A673 (cell line): ENCODE measurements at regions of chr16 and their contacts with region 1.

Region 1: GRCh38 chr16:1884155-1884760 is 12.3 kb upstream of the MEIOB start:
- DNase-seq: peak; percentile 56
- H3K4me3 ChIP-seq: no peak overlapping the region
- H3K27ac ChIP-seq: no peak overlapping the region
- H3K4me1 ChIP-seq: no peaks in the 10 kb centered on the region
- H3K27me3 ChIP-seq: peaks cover 4% of the 10 kb centered on the region
- CTCF ChIP-seq: peak; percentile 37

Region 2: DNA sequence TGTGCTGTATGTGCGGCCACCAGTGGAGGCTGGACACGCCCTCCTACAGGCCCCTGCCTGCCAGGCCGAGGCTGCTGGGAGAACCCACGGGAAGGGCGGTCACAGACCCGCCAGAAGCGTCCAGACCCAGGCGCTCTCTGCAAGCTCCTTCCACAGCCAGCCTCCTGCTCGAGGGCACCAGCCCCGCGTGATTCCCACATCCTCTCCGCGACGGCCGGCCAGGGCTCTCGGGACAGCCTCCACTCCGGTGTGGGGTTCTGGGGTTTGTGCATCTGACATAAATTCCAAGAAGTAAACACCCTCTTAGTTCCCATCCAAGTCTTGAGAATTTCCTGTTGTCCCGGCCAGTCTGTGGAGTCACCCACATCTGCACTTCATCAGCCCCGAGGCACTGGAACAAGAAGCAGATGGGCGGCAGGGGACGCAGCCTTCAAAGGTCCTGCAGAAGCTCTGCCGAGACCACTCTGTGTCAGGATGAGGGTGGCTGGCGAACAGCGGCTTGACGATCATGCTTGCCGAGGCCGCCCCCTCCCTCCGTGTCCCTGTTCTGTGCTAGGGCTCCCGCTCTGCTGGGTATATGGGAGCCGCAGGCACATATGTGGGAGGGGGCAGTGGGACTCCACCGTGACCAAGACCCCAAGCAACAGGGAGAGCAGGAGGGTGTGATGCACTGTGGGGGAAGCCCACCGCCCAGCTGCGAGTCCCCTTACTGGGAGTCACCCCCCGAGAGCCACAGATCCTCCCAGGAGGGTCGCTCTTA is 353.2 kb before region 1 on chr16:
- CTCF ChIA-PET with region 1: no interaction called
- POLR2A ChIA-PET with region 1: no interaction called
- intact Hi-C with region 1: no loop called
- DNase-seq: no peak
- H3K4me3 ChIP-seq: no peak overlapping the region
- H3K27ac ChIP-seq: no peak overlapping the region
- H3K4me1 ChIP-seq: no peaks in the 10 kb centered on the region
- H3K27me3 ChIP-seq: no peaks in the 10 kb centered on the region
- CTCF ChIP-seq: no peak

Region 3: GRCh38 chr16:1899641-1900451 is 15.6 kb after region 1 on chr16:
- CTCF ChIA-PET with region 1: interaction called, 13 read pairs
- POLR2A ChIA-PET with region 1: no interaction called
- intact Hi-C with region 1: no loop called
- DNase-seq: no peak
- H3K4me3 ChIP-seq: no peak overlapping the region
- H3K27ac ChIP-seq: no peak overlapping the region
- H3K4me1 ChIP-seq: no peaks in the 10 kb centered on the region
- H3K27me3 ChIP-seq: no peaks in the 10 kb centered on the region
- CTCF ChIP-seq: no peak

Region 4: GRCh38 chr16:1906846-1907165 is 22.5 kb after region 1 on chr16:
- CTCF ChIA-PET with region 1: no interaction called
- POLR2A ChIA-PET with region 1: interaction called, 16 read pairs
- intact Hi-C with region 1: no loop called
- DNase-seq: no peak
- H3K4me3 ChIP-seq: no peak overlapping the region
- H3K27ac ChIP-seq: no peak overlapping the region
- H3K4me1 ChIP-seq: no peaks in the 10 kb centered on the region
- H3K27me3 ChIP-seq: no peaks in the 10 kb centered on the region
- CTCF ChIP-seq: no peak